ENCODE measurements at regions of chr22 and their contacts with region 1.

Region 1: DNA sequence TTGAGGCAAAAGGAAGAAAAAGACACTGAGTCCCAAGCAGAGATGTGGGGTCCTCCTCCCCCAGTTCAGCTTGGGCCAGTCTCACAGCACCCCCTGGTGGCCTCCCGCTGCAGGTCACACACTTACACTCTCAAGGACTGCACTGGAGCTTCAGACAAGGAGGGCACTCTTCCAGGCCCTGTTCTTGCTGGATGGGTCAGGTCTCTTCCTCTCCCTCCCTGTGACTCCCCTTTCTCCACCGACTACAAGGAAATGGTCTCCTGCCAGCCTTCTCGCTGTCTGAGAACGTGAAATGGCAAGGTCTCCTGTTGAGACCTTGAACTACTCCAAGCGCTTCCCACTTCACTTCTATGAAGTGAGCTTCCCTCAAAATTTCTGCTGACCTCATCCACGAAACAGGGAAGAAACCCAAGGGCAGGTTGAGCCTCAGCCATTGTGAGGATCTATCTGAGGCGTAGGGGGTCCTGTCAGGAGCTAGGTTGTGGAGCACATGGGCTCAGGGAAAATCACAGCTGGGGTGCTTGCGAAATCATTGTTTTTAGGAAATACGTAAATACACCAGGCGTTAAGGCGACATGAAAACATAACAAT is 11.2 kb upstream of the IGLL1 start:
- DNase-seq: peak; percentile 41
- ATAC-seq: peak; percentile 92
- H3K4me3 ChIP-seq: no peak overlapping the region
- H3K27ac ChIP-seq: no peak overlapping the region
- H3K4me1 ChIP-seq: peaks cover 20% of the 10 kb centered on the region
- H3K27me3 ChIP-seq: no peaks in the 10 kb centered on the region; a peak in 2 of 5 replicates
- CTCF ChIP-seq: peak; percentile 98
- EP300 ChIP-seq: no peak
- POLR2A ChIP-seq: no peak
- RAD21 ChIP-seq: peak; percentile 88

Region 2: DNA sequence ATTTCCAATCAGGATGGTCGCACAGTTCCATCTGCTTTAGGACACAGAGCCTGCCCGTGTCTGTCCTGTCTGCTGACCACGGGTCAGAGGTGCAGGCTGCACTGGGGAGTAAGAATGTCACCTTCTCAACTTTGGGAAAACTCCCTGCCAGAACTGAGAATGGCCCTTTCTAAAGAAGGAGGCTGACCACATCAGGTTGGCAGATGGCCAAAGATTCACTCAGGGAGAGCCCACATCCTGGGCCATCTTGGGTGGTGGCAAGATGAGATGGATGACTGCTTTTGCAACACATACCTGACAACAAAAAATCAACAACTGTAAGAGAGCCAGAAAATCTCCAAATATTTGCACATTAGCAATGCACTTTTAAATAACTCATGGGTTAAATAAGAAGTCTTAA is 113.1 kb before region 1 on chr22:
- CTCF ChIA-PET with region 1: no interaction called
- POLR2A ChIA-PET with region 1: no interaction called
- in situ Hi-C with region 1: loop called (anchors 25 kb)
- intact Hi-C with region 1: no loop called
- DNase-seq: no peak
- ATAC-seq: no peak
- H3K4me3 ChIP-seq: no peak overlapping the region
- H3K27ac ChIP-seq: no peak overlapping the region
- H3K4me1 ChIP-seq: no peaks in the 10 kb centered on the region
- H3K27me3 ChIP-seq: 0 out of 5 replicates have a peak, but pooled peaks cover 0 to 5% of the 10 kb centered on the region in 2 experiments
- CTCF ChIP-seq: no peak
- EP300 ChIP-seq: no peak
- POLR2A ChIP-seq: no peak
- RAD21 ChIP-seq: no peak

Region 3: GRCh38 chr22:23857606-23858483 is 266.5 kb after region 1 on chr22 and contains the start of gene SLC2A11:
- CTCF ChIA-PET with region 1: no interaction called
- POLR2A ChIA-PET with region 1: no interaction called
- in situ Hi-C with region 1: no loop called
- intact Hi-C with region 1: no loop called
- DNase-seq: peak; percentile 96
- ATAC-seq: peak; percentile 93
- H3K4me3 ChIP-seq: peak within 1 kb of the TSS; percentile 65 to 89 (median 75)
- H3K27ac ChIP-seq: peak within 1 kb of the TSS; percentile 81
- H3K4me1 ChIP-seq: peaks cover 25% of the 10 kb centered on the region
- H3K27me3 ChIP-seq: no peaks in the 10 kb centered on the region; a peak in 1 of 5 replicates
- CTCF ChIP-seq: peak; percentile 19
- EP300 ChIP-seq: no peak
- POLR2A ChIP-seq: peak; percentile 47 to 93; a peak in 3 of 4 replicates
- RAD21 ChIP-seq: no peak
- total RNA-seq, gene SLC2A11: 8.9 and 15.2 TPM in 2 replicates

Measured in HepG2 (cell line).